ENCODE measurements at regions of chr20 and their contacts with region 1.

Region 1: DNA sequence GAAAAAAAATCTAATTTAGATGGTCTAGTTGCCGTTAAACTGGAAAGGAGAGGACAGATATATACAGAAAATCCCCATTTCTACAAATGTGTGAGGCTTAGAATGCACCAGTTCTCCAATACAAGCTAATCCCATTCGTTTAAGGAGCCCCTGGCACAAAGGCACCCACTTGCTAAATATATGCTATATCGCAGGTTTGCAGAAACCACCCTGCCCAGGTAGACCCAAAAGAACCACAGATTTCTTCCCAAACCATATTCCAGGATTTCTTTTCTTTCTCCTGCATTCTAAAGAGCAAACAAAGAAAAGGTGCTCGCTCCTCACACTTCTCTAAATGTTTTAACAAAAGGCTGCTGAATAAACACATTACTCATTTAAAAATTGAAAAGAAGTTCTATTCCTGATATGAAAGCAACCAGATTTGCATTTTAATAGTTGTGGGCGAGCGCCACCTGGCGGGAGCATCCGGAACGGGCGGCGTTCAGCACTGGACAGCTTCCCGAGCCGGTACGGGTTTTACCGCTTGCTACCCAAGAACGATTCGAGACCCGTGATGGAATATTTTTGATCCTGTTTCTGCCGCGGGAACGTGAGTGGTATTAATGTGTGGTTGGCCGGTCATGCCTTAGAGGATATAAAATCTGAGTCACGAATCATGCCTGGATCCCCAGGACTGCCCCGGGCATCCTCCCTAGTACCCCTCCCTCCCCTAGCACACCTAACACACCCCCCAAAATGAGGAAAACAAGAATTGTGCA is 2.1 kb downstream of the PTPRT start:
- DNase-seq: peak; percentile 89
- H3K4me3 Mint-ChIP-seq: no peak overlapping the region
- H3K27ac Mint-ChIP-seq: peak overlapping the region; percentile 13
- H3K4me1 Mint-ChIP-seq: peaks cover 8% of the 10 kb centered on the region
- H3K27me3 Mint-ChIP-seq: peaks cover 93% of the 10 kb centered on the region
- CTCF ChIP-seq: peak; percentile 98

Region 2: GRCh38 chr20:41889126-41889870 is 1298.4 kb before region 1 on chr20:
- CTCF ChIA-PET with region 1: interaction called, 3 read pairs
- intact Hi-C with region 1: loop called (anchors 10 kb)
- DNase-seq: peak; percentile 50
- H3K4me3 Mint-ChIP-seq: no peak overlapping the region
- H3K27ac Mint-ChIP-seq: no peak overlapping the region
- H3K4me1 Mint-ChIP-seq: peaks cover 20% of the 10 kb centered on the region
- H3K27me3 Mint-ChIP-seq: no peaks in the 10 kb centered on the region
- CTCF ChIP-seq: peak; percentile 13

Region 3: DNA sequence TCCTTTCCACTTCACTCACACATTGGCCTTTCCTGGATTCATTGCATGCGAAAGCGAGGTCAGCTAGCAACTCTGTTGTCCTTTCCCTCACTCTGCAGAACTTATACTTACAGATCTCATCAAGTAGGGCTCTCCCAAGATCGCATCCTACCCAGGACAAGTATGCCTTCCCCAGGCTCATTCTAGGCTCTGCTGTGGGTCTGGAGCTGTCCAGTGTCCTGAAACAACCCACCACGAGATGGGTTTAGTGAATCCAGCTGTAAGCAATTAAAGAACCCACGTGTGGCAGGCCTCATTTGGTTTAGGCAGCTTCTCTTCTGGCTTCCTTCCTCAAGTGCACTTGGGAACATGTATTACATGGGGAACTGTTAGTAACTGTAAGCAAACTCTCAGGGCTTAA is 1163.0 kb before region 1 on chr20:
- CTCF ChIA-PET with region 1: no interaction called
- intact Hi-C with region 1: loop called (anchors 5 kb)
- DNase-seq: no peak
- H3K4me3 Mint-ChIP-seq: no peak overlapping the region
- H3K27ac Mint-ChIP-seq: no peak overlapping the region
- H3K4me1 Mint-ChIP-seq: no peaks in the 10 kb centered on the region
- H3K27me3 Mint-ChIP-seq: peaks cover 18% of the 10 kb centered on the region
- CTCF ChIP-seq: no peak

Region 4: GRCh38 chr20:42530822-42531448 is 656.7 kb before region 1 on chr20:
- CTCF ChIA-PET with region 1: interaction called, 3 read pairs
- intact Hi-C with region 1: loop called (anchors 10 kb)
- DNase-seq: peak; percentile 34
- H3K4me3 Mint-ChIP-seq: no peak overlapping the region
- H3K27ac Mint-ChIP-seq: no peak overlapping the region
- H3K4me1 Mint-ChIP-seq: no peaks in the 10 kb centered on the region
- H3K27me3 Mint-ChIP-seq: peaks cover 18% of the 10 kb centered on the region
- CTCF ChIP-seq: peak; percentile 81

Region 5: DNA sequence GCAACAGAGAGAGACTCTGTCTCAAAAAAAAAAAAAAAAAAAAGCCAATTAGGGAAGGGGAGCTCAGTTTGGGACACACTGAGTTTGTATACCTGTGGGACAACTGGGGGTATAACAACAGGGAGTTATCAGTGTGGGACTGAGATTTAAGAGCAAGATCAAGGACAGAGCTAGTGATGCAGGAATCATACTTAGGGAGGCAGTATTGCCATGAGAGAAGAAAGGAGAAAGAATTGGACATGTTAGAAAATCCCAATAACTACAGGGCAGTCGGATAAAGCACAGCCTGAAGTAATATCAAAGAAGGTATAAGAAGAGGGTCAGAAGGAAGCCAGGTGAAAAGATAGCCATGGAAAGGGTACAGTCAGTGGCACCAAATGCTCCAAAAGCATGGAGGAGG is 119.2 kb before region 1 on chr20:
- CTCF ChIA-PET with region 1: no interaction called
- intact Hi-C with region 1: loop called (anchors 2 kb)
- DNase-seq: no peak
- H3K4me3 Mint-ChIP-seq: no peak overlapping the region
- H3K27ac Mint-ChIP-seq: no peak overlapping the region
- H3K4me1 Mint-ChIP-seq: no peaks in the 10 kb centered on the region
- H3K27me3 Mint-ChIP-seq: peaks cover 46% of the 10 kb centered on the region
- CTCF ChIP-seq: no peak

Region 6: GRCh38 chr20:43408848-43409576 is 221.4 kb after region 1 on chr20:
- CTCF ChIA-PET with region 1: no interaction called
- intact Hi-C with region 1: loop called (anchors 2 kb)
- DNase-seq: peak; percentile 40
- H3K4me3 Mint-ChIP-seq: no peak overlapping the region
- H3K27ac Mint-ChIP-seq: no peak overlapping the region
- H3K4me1 Mint-ChIP-seq: no peaks in the 10 kb centered on the region
- H3K27me3 Mint-ChIP-seq: peaks cover 78% of the 10 kb centered on the region
- CTCF ChIP-seq: peak; percentile 79